ENCODE measurements at regions of chr15 and their contacts with region 1.

Region 1: DNA sequence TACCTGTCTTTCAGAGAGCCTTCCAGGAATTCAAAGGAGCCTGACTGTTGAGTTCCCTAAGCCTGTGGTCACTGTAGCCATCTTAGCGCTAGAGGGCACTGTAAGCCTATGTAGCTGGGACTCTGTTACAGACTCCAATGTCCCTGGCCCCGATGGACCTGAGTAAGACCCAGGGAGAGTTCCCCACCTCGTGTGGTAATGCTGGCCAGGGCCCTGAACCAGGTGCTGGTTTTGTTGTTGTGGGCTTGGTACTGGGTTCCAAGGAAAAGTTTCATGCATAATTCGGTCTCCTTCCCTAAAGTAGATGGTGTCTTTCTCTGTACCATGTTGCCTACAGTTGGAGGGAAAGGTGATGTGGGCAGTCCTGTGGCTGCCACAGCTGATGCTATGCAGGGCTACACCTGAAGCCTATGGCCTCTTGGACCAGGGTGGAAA is 32.4 kb downstream of the CDAN1 start:
- DNase-seq: peak; percentile 68
- H3K4me3 ChIP-seq: no peak overlapping the region
- H3K27ac ChIP-seq: no peak overlapping the region
- H3K4me1 ChIP-seq: no peaks in the 10 kb centered on the region
- H3K27me3 ChIP-seq: no peaks in the 10 kb centered on the region
- CTCF ChIP-seq: peak; percentile 46 to 80 (median 70)
- POLR2A ChIP-seq: no peak

Region 2: DNA sequence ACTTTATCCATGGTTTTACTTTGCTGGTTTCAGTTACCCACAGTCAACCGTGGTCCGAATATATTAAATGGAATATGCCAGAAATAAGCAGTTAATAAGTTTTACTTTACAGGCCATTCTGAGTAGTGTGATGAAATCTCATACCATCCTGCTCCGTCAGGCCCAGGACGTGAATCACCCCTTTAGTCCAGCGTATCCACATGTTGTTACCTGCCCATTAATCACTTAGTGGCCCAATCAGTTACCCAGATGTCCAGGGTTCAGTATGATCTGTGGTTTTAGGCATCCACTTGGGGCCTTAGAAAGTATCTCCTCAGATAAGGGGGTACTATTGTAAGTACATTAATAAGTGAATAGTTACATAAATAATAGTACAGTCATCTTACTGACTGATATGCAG is 128.1 kb after region 1 on chr15:
- intact Hi-C with region 1: no loop called
- DNase-seq: peak; percentile 29
- H3K4me3 ChIP-seq: no peak overlapping the region
- H3K27ac ChIP-seq: no peak overlapping the region
- H3K4me1 ChIP-seq: no peaks in the 10 kb centered on the region
- H3K27me3 ChIP-seq: no peaks in the 10 kb centered on the region
- CTCF ChIP-seq: no peak
- POLR2A ChIP-seq: no peak

Region 3: GRCh38 chr15:42929306-42929848 is 224.9 kb after region 1 on chr15:
- intact Hi-C with region 1: loop called (anchors 5 kb)
- DNase-seq: no peak
- H3K4me3 ChIP-seq: no peak overlapping the region
- H3K27ac ChIP-seq: no peak overlapping the region
- H3K4me1 ChIP-seq: no peaks in the 10 kb centered on the region
- H3K27me3 ChIP-seq: no peaks in the 10 kb centered on the region
- CTCF ChIP-seq: no peak
- POLR2A ChIP-seq: no peak

Region 4: GRCh38 chr15:43204016-43204901 is 499.8 kb after region 1 on chr15:
- intact Hi-C with region 1: loop called (anchors 10 kb)
- DNase-seq: peak; percentile 34
- H3K4me3 ChIP-seq: no peak overlapping the region
- H3K27ac ChIP-seq: no peak overlapping the region
- H3K4me1 ChIP-seq: no peaks in the 10 kb centered on the region
- H3K27me3 ChIP-seq: no peaks in the 10 kb centered on the region
- CTCF ChIP-seq: peak in 3 of 4 experiments; percentile 42 to 57 (median 43)
- POLR2A ChIP-seq: no peak

Measured in prostate gland (tissue), 2 donors.